ENCODE measurements at regions of chr11 and their contacts with region 1.

Region 1: DNA sequence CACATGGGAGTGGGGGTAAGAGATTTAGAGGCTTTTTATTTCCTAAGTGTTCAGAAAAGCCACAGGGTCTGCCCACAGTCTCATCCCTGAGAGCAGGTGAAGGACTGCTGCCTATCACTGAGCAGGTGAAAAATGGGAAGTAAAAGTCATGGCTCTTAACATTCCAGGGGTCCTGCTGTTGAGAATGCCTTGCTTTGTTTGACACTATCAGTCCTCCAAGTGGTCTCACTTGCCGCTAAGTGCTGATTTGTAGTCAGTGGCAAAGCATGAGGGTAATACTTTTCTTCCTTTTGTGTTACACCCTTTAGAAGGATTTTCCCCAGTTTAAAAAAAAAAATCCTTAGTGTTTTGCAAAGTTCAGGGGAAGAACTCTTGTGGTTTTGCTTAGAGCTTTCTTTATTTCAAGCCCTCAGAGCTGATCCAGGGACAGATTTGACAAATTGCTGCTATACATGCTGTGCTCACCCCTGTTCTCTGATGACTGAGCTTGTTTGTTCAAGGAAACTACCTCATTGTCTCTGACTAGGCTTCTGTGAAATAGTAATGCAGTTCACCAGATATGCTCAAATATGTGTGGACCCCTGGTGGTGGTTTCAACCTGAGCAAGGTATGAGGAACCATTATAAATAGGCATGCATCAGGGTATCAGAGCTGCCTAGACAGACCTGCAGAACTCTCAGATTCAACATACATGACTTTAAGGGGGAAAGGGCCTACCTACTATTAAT is 141.0 kb downstream of the ARHGAP42 start:
- DNase-seq: no peak

Region 2: GRCh38 chr11:100855466-100856067 is 27.5 kb after region 1 on chr11:
- intact Hi-C with region 1: no loop called
- DNase-seq: no peak

Region 3: DNA sequence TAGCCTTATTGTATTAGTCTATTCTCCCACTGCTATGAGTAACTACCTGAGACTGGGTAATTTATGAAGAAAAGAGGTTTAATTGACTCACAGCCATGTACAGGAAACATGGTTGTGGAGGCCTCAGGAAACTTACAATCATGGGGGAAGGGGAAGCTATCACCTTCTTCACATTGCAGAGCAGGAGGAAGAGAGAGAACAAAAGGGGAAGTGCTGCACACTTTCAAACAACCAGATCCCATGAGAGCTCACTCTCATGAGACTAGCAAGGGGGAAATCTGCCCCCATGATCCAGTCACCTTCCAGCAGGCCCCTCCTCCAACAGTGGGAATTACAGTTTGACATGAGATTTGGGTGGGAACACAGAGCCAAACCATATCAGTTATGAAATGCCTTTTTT is 38.4 kb after region 1 on chr11:
- intact Hi-C with region 1: no loop called
- DNase-seq: no peak

Region 4: DNA sequence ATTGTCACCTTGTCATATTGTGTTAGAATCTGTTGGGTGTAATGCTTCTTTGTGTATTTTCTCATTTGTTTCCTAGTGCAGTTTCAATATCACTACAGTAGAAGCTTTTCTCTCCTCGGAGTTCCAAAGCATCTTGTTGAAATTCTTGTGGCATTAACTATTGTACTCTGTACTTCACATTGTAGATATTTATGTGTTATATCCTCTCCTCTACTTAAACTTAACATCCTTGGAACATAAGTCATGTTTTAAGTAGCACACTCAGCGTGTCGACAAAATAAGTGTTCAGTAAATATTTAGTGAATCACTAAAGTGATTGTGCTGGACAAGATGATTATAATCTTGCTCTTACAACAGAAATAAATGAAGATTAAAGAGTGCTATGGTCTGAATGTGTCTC is 60.7 kb after region 1 on chr11:
- intact Hi-C with region 1: loop called (anchors 10 kb)
- DNase-seq: no peak

Measured in posterior cingulate gyrus (tissue), 11 donors.